Caco-2 (cell line): ENCODE measurements at regions of chr2 and their contacts with region 1.

Region 1: DNA sequence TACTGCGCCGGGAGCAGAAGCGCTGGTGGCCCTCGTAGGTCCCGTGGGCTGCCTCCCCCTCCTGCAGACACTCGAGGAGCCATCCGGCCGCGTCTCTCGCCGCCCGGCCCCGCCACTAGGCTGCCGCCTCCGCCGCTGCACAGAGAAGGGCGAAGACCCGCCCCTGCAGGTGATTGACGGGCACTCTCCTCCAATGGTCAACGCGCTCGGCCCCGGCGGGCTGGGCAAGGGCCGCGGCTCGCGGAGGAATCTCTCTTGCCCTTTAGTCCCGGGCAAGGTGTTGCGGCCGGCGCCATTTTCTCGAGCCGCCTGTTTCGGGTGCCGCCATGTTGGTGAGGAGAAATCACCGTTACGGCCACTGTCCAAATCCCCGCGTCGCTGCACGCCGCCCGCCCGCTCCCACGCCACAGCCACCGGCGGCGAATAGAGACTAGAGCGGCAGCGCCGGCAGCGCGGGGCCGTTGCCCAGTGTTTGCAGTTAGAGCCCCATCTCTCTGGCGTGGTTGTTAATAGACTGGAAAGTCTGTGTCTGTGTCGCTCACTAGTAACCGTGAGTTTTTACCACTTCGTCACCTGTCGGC is at the start of gene ZC3H6:
- DNase-seq: peak; percentile 98 to 100
- H3K4me3 ChIP-seq: peak within 1 kb of the TSS; percentile 98
- H3K4me3 Mint-ChIP-seq: peak within 1 kb of the TSS; percentile 81
- H3K27ac Mint-ChIP-seq: peak within 1 kb of the TSS; percentile 93
- H3K4me1 ChIP-seq: no peaks in the 10 kb centered on the region
- H3K4me1 Mint-ChIP-seq: peaks cover 7% of the 10 kb centered on the region
- H3K27me3 ChIP-seq: no peaks in the 10 kb centered on the region
- H3K27me3 Mint-ChIP-seq: no peaks in the 10 kb centered on the region
- CTCF ChIP-seq: peak; percentile 17 to 18
- total RNA-seq, gene ZC3H6: 1.9 and 3.2 TPM in 2 replicates

Region 2: DNA sequence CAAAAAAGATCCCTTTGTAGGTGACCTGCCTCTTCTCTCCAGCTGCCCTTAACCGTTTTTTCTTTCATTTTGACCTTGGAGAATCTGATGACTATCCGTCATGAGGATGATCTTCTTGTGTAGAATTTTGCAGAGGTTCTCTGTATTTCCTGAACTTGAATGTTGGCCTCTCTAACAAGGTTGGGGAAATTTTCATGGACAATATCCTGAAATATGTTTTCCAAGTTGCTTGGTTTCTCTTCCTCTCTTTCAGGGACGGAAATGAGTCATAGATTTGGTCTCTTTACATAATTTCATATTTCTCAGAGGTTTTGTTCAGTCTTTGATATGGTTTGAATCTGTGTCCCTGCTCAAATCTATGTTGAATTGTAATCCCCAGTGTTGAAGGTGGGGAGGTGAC is 54.6 kb before region 1 on chr2:
- CTCF ChIA-PET with region 1: no interaction called
- POLR2A ChIA-PET with region 1: no interaction called
- intact Hi-C with region 1: no loop called
- DNase-seq: no peak
- H3K4me3 ChIP-seq: no peak overlapping the region
- H3K4me3 Mint-ChIP-seq: no peak overlapping the region
- H3K27ac Mint-ChIP-seq: no peak overlapping the region
- H3K4me1 ChIP-seq: no peaks in the 10 kb centered on the region
- H3K4me1 Mint-ChIP-seq: no peaks in the 10 kb centered on the region
- H3K27me3 ChIP-seq: no peaks in the 10 kb centered on the region
- H3K27me3 Mint-ChIP-seq: no peaks in the 10 kb centered on the region
- CTCF ChIP-seq: no peak

Region 3: GRCh38 chr2:112301171-112301584 is 25.8 kb after region 1 on chr2:
- CTCF ChIA-PET with region 1: no interaction called
- POLR2A ChIA-PET with region 1: no interaction called
- intact Hi-C with region 1: loop called (anchors 1 kb)
- DNase-seq: peak; percentile 44 to 56
- H3K4me3 ChIP-seq: no peak overlapping the region
- H3K4me3 Mint-ChIP-seq: peak overlapping the region; percentile 25
- H3K27ac Mint-ChIP-seq: peak overlapping the region; percentile 48
- H3K4me1 ChIP-seq: peaks cover 33% of the 10 kb centered on the region
- H3K4me1 Mint-ChIP-seq: peaks cover 43% of the 10 kb centered on the region
- H3K27me3 ChIP-seq: no peaks in the 10 kb centered on the region
- H3K27me3 Mint-ChIP-seq: no peaks in the 10 kb centered on the region
- CTCF ChIP-seq: no peak